ENCODE measurements at regions of chr7 and their contacts with region 1.

Region 1: GRCh38 chr7:92134271-92135051 is at the start of gene CYP51A1:
- DNase-seq: peak; percentile 93 to 98 (median 96)
- ATAC-seq: peak; percentile 93
- H3K4me3 ChIP-seq: peak within 1 kb of the TSS; percentile 92
- H3K4me3 Mint-ChIP-seq: peak within 1 kb of the TSS; percentile 95 to 100 (median 98)
- H3K27ac ChIP-seq: peak within 1 kb of the TSS; percentile 94
- H3K27ac Mint-ChIP-seq: peak within 1 kb of the TSS; percentile 89 to 100 (median 99)
- H3K4me1 ChIP-seq: peaks cover 4 to 12% of the 10 kb centered on the region in 2 donors
- H3K4me1 Mint-ChIP-seq: peaks cover 12 to 49% (median 40%) of the 10 kb centered on the region in 7 donors
- H3K27me3 ChIP-seq: no peaks in the 10 kb centered on the region
- H3K27me3 Mint-ChIP-seq: peaks cover 0 to 2% (median 0%) of the 10 kb centered on the region in 5 donors
- total RNA-seq, gene CYP51A1: 14.7 to 36.6 (median 21.7) TPM

Region 2: DNA sequence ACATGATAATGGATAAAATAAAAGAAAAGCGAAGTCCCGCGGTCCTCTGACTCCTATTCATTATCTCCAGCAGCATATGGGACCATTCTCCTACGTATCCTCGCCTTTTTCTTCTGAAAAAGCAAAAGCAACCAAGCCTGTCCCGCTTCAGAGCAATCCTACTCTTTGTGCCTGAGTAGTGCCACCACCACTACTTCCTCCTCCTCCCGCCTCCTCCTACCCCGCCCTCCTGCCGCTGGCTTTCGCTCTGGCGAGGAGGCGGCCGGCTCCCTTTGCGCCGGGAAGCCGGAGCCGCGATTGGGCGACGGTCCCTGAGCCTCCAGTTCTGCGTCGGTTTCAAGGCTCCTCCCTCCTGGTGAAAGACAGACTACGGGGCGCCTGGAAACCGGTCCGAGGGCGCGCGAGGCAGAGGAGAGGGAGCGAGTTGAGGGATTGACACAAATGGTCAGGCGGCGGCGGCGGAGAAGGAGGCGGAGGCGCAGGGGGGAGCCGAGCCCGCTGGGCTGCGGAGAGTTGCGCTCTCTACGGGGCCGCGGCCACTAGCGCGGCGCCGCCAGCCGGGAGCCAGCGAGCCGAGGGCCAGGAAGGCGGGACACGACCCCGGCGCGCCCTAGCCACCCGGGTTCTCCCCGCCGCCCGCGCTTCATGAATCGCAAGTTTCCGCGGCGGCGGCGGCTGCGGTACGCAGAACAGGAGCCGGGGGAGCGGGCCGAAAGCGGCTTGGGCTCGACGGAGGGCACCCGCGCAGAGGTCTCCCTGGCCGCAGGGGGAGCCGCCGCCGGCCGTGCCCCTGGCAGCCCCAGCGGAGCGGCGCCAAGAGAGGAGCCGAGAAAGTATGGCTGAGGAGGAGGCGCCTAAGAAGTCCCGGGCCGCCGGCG is 870.2 kb before region 1 on chr7 and contains the start of gene FZD1:
- CTCF ChIA-PET with region 1: no interaction called
- POLR2A ChIA-PET with region 1: no interaction called
- intact Hi-C with region 1: loop called in 1 of 2 experiments (anchors 2 kb)
- DNase-seq: peak in 8 of 9 donors; percentile 7 to 77 (median 44)
- ATAC-seq: peak; percentile 89
- H3K4me3 ChIP-seq: peak within 1 kb of the TSS; percentile 47
- H3K4me3 Mint-ChIP-seq: peak within 1 kb of the TSS; percentile 87 to 96 (median 92)
- H3K27ac ChIP-seq: no peak within 1 kb of the TSS
- H3K27ac Mint-ChIP-seq: peak within 1 kb of the TSS in 3 of 9 donors; percentile 42 to 75 (median 63)
- H3K4me1 ChIP-seq: peaks cover 0 to 9% of the 10 kb centered on the region in 2 donors
- H3K4me1 Mint-ChIP-seq: peaks cover 0 to 26% (median 12%) of the 10 kb centered on the region in 7 donors
- H3K27me3 ChIP-seq: no peaks in the 10 kb centered on the region
- H3K27me3 Mint-ChIP-seq: peaks cover 16 to 60% (median 41%) of the 10 kb centered on the region in 5 donors
- total RNA-seq, gene FZD1: 0.24 to 3.4 (median 0.64) TPM

Region 3: DNA sequence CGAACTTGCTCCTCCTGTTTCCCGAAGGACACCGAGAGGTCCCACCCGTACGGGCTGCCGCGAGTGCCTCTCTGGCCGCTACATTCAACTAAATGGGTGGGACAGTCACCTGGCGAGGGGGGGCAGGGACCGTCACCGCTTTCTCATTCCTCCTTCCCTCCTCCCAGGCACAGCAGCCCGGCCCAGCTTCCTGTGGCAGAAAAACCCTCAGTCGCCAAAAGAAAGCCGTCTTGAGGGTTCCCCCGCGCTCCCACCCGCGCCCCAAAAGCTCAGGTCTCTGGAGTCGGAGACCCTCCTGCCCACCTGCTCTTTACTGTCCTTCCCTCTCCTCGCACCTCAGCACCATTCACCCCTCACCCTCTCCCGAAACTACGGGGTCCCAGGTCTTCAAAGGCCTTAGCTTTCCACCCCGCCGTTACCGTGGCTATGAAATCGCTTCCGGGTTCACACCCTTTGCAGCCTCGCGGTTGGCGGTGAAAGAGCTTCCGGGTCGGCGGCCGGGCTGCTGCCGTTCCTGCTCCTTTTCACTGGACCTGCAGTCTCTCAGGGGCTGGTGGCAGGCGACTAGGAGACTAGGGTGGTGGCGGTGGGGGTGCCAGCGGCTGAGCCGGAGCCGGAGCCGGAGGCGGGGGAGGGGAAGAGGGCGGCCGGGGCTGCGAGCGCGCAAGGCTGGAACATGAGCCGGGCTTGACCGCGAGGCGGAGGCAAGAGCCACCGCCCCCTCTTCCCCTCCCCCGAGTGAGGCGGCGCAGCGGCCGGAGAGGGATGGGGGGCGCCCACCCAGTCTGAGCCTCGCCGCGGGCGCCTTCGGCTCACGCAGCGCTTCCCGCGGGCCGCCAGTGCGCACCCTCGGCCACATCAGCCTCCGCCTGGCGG is 111.3 kb after region 1 on chr7 and contains the starts of genes ANKIB1 and KRIT1:
- CTCF ChIA-PET with region 1: no interaction called
- POLR2A ChIA-PET with region 1: interaction called, 4 read pairs
- intact Hi-C with region 1: loop called (anchors 1 kb)
- DNase-seq: peak; percentile 68 to 88 (median 86)
- ATAC-seq: peak; percentile 87
- H3K4me3 ChIP-seq: peak within 1 kb of the TSS; percentile 80
- H3K4me3 Mint-ChIP-seq: peak within 1 kb of the TSS; percentile 97 to 100 (median 98)
- H3K27ac ChIP-seq: peak within 1 kb of the TSS; percentile 92
- H3K27ac Mint-ChIP-seq: peak within 1 kb of the TSS; percentile 98 to 100 (median 100)
- H3K4me1 ChIP-seq: peaks cover 15 to 22% of the 10 kb centered on the region in 2 donors
- H3K4me1 Mint-ChIP-seq: peaks cover 30 to 64% (median 45%) of the 10 kb centered on the region in 7 donors
- H3K27me3 ChIP-seq: no peaks in the 10 kb centered on the region
- H3K27me3 Mint-ChIP-seq: no peaks in the 10 kb centered on the region
- total RNA-seq, gene ANKIB1: 54.8 to 98.6 (median 68.2) TPM
- total RNA-seq, gene KRIT1: 45.7 to 78.7 (median 48.6) TPM

Region 4: DNA sequence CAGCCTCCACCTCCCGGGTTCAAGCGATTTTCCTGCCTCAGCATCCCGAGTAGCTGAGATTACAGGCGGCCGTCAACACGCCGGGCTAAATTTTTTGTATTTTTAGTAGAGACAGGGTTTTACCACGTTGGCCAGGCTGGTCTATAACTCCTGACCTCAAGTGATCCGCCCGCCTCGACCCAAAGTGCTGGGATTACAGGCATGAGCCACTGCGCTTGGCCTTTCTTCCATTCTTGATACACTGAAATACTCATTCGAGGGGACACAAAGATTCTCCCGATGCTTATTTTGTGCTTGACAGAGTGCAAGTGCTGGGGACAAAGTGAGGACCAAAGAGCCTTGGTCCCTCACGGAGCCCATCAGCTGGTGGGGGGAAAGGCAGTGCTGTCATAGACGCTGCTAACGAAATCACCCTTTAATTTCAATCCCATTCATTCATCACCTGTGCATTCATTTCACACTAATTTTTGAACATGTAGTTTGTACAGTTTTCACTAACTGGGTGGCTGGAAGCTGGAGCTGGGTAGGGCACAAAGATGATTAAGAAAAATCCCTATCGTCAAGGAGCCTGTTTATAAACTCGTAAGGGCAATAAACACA is 456.4 kb after region 1 on chr7:
- CTCF ChIA-PET with region 1: no interaction called
- POLR2A ChIA-PET with region 1: interaction called, 4 read pairs
- intact Hi-C with region 1: loop called (anchors 1 to 2 kb)
- DNase-seq: peak in 1 of 9 donors; percentile 11
- ATAC-seq: no peak
- H3K4me3 ChIP-seq: peak overlapping the region; percentile 77
- H3K4me3 Mint-ChIP-seq: peak overlapping the region; percentile 90 to 96 (median 94)
- H3K27ac ChIP-seq: peak overlapping the region; percentile 94
- H3K27ac Mint-ChIP-seq: peak overlapping the region in 8 of 9 donors; percentile 22 to 96 (median 76)
- H3K4me1 ChIP-seq: peaks cover 14 to 21% of the 10 kb centered on the region in 2 donors
- H3K4me1 Mint-ChIP-seq: peaks cover 27 to 46% (median 39%) of the 10 kb centered on the region in 7 donors
- H3K27me3 ChIP-seq: no peaks in the 10 kb centered on the region
- H3K27me3 Mint-ChIP-seq: peaks cover 0 to 4% (median 0%) of the 10 kb centered on the region in 5 donors

Measured in naive thymus-derived CD4-positive, alpha-beta T cell (primary cell).